Activated T-helper 2 cell treated with anti-CD3 and anti-CD28 coated beads, Interferon-gamma antibody, Interleukin-2, Interleukin-4, amounts not matched to agents 10 μg/mL and 5 μg/mL and 100 μg/mL, durations not matched to agents 14 hours and 24 hours and 36 hours (primary cell): ENCODE measurements at regions of chr11 and their contacts with region 1.

Region 1: DNA sequence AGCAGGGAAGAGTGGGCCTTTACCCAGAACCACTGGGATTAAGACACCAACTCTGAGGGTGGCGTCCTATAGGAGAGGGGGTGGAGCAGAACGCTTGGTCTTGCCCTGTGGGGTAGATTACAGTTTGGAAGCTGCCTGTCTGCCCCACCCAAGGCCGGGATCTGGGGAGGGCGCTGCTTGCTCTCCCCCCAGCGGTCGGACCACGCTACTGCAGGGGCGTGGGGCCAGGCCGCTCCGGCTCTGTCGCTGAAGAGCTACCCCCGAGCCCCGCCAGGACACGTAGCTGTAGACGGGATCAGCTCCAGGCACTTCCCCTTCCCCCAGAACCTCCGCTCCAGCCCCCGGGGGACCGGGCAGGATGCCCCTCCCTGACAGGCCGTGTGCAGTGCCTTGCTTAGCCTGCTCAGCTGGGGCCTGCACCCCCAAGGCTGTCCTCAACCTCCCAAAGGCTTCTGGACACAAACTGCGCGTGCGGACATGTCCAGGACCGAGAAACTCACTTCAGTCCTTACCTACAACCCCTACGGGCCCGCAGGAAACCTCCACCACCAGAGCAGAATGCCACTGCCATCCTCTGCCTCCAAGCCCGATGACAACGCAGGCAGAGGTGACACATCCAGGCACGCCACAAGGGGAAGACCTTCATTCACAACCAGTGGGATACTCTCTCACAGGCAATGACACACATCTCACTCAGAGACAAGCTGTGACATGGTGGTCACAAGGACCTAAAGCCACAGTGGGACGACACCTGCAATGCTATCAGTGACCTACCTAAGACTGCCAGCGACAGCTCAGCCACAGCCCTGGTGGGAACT is 3.6 kb downstream of the AHNAK start:
- DNase-seq: peak; percentile 68
- H3K4me3 Mint-ChIP-seq: peak overlapping the region; percentile 95
- H3K27ac Mint-ChIP-seq: peak overlapping the region; percentile 55
- H3K4me1 Mint-ChIP-seq: peaks cover 71% of the 10 kb centered on the region
- H3K27me3 Mint-ChIP-seq: peaks cover 5% of the 10 kb centered on the region

Region 2: GRCh38 chr11:62394825-62395538 is 148.0 kb before region 1 on chr11:
- intact Hi-C with region 1: loop called (anchors 2 kb)
- DNase-seq: peak; percentile 40
- H3K4me3 Mint-ChIP-seq: no peak overlapping the region
- H3K27ac Mint-ChIP-seq: no peak overlapping the region
- H3K4me1 Mint-ChIP-seq: peaks cover 10% of the 10 kb centered on the region
- H3K27me3 Mint-ChIP-seq: peaks cover under 1% of the 10 kb centered on the region

Region 3: GRCh38 chr11:62427630-62428233 is 115.2 kb before region 1 on chr11:
- intact Hi-C with region 1: loop called (anchors 1 kb)
- DNase-seq: peak; percentile 26
- H3K4me3 Mint-ChIP-seq: peak overlapping the region; percentile 43
- H3K27ac Mint-ChIP-seq: peak overlapping the region; percentile 89
- H3K4me1 Mint-ChIP-seq: peaks cover 53% of the 10 kb centered on the region
- H3K27me3 Mint-ChIP-seq: no peaks in the 10 kb centered on the region

Region 4: GRCh38 chr11:62497132-62497915 is 45.6 kb before region 1 on chr11:
- intact Hi-C with region 1: loop called (anchors 5 kb)
- DNase-seq: no peak
- H3K4me3 Mint-ChIP-seq: no peak overlapping the region
- H3K27ac Mint-ChIP-seq: no peak overlapping the region
- H3K4me1 Mint-ChIP-seq: peaks cover 3% of the 10 kb centered on the region
- H3K27me3 Mint-ChIP-seq: peaks cover 16% of the 10 kb centered on the region